ENCODE measurements at regions of chr21 and their contacts with region 1.

Region 1: GRCh38 chr21:37267269-37268184 is at the start of gene VPS26C:
- DNase-seq: peak; percentile 93 to 100 (median 95)
- ATAC-seq: peak; percentile 91
- H3K4me3 ChIP-seq: peak within 1 kb of the TSS; percentile 71
- H3K27ac ChIP-seq: peak within 1 kb of the TSS; percentile 99
- H3K4me1 ChIP-seq: peaks cover 26 to 31% of the 10 kb centered on the region in 2 experiments; a peak in 4 of 5 replicates
- H3K27me3 ChIP-seq: no peaks in the 10 kb centered on the region
- CTCF ChIP-seq: 0 out of 6 replicates have a peak, but pooled peaks of 1 of the 3 experiments have one; percentile 8
- EP300 ChIP-seq: peak; percentile 23
- POLR2A ChIP-seq: peak; percentile 99
- RAD21 ChIP-seq: peak in 1 of 2 experiments; percentile 29; a peak in 2 of 4 replicates
- polyA plus RNA-seq, gene VPS26C: 32.8 to 42.2 TPM

Region 2: DNA sequence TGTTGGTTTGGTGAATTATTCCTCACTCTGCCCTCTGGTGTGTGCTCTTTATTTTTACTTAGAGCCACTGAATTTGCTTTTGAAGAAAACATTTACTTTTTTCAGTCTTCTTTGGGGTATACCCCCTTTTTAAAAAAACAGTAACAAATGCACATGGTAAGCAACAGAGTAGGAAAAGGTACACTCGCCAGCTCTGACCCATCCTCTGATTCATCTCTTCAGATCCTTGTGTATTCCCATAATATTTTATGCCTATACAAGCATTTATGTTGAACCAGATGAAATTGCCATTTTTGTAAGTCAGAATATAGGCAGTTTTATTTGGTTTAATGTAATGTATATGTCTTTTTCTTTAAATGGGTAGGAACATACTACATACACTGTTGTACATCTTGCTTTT is 166.1 kb before region 1 on chr21:
- CTCF ChIA-PET with region 1: no interaction called
- POLR2A ChIA-PET with region 1: no interaction called
- in situ Hi-C with region 1: no loop called
- intact Hi-C with region 1: no loop called
- DNase-seq: no peak
- ATAC-seq: no peak
- H3K4me3 ChIP-seq: no peak overlapping the region
- H3K27ac ChIP-seq: no peak overlapping the region
- H3K4me1 ChIP-seq: no peaks in the 10 kb centered on the region
- H3K27me3 ChIP-seq: no peaks in the 10 kb centered on the region
- CTCF ChIP-seq: no peak
- EP300 ChIP-seq: no peak
- POLR2A ChIP-seq: no peak
- RAD21 ChIP-seq: no peak

Region 3: GRCh38 chr21:37253991-37254390 is 13.5 kb before region 1 on chr21:
- CTCF ChIA-PET with region 1: no interaction called
- POLR2A ChIA-PET with region 1: interaction called, 10 read pairs
- in situ Hi-C with region 1: no loop called
- intact Hi-C with region 1: no loop called
- DNase-seq: no peak
- ATAC-seq: no peak
- H3K4me3 ChIP-seq: no peak overlapping the region
- H3K27ac ChIP-seq: no peak overlapping the region
- H3K4me1 ChIP-seq: peaks cover 8 to 9% of the 10 kb centered on the region in 2 experiments; a peak in 4 of 5 replicates
- H3K27me3 ChIP-seq: no peaks in the 10 kb centered on the region
- CTCF ChIP-seq: no peak
- EP300 ChIP-seq: no peak
- POLR2A ChIP-seq: no peak
- RAD21 ChIP-seq: no peak

Region 4: DNA sequence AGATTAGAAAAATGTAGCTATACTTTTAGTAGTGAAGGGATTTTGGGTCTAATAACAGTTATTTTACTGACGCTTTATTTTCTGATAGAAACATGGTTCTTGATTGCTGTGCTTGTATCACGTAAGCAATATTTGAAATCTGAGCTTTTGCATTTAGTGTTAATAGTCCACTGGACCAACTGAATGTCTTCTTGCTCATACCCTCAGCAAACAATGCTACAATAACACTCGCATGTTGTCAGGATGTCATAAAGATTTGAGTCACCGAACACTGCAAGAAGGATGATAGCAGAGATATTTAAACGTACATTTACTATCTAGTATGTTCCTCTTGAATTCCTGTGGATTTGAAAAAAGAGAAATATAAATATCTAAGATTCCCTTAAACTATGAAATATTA is 106.5 kb after region 1 on chr21:
- CTCF ChIA-PET with region 1: no interaction called
- POLR2A ChIA-PET with region 1: interaction called, 10 read pairs
- in situ Hi-C with region 1: no loop called
- intact Hi-C with region 1: loop called (anchors 2 kb)
- DNase-seq: no peak
- ATAC-seq: no peak
- H3K4me3 ChIP-seq: no peak overlapping the region
- H3K27ac ChIP-seq: peak overlapping the region; percentile 32; the same call in 2 of the 3 replicates
- H3K4me1 ChIP-seq: peaks cover 21 to 55% of the 10 kb centered on the region in 2 experiments
- H3K27me3 ChIP-seq: no peaks in the 10 kb centered on the region
- CTCF ChIP-seq: no peak
- EP300 ChIP-seq: no peak
- POLR2A ChIP-seq: no peak
- RAD21 ChIP-seq: no peak

Measured in K562 (cell line).